ENCODE measurements at regions of chr1 and their contacts with region 1.

Region 1: DNA sequence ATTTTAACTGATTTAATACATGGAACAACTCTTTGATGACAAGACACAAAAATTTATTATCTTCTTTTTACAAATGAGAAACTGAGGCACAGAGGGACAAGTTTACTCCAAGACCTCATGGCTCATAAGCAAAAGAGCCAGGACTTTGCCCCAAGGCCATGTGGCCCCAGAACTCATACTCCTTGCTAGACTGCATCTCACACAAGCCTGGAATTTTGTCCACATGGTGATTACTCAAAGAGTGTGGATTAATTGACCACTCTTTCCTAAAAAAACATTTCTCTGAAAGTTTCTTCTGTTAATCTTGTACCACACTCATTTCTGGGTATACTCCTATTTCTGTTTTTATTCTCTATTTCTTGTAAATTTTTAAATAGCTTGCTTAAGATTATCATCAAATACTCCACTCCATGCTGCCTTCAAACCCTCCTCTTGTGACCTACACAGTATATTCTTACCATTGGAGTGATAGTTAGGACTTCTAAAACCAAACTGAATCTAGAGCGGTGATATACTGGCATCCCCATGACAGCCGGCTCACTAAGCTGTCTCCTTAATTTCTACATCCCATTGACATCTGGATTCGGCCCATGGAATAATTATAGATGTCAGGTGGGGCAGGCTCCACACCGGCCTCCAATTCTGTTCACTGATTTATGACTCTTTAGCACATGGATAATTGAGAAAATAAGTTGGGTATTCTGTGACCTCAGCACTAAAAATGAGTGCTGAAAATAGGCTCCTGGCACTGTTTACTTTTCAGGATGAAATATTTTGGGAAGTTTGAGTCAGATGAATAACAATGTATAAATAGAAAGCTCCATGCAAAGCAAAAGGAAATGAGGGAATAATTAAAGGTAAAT is 16.1 kb downstream of the RGS4 start:
- DNase-seq: no peak
- ATAC-seq: peak; percentile 72
- H3K4me3 ChIP-seq: no peak overlapping the region
- H3K27ac ChIP-seq: peak overlapping the region; percentile 93 to 95
- H3K4me1 ChIP-seq: peaks cover 9 to 14% of the 10 kb centered on the region in 2 donors
- H3K27me3 ChIP-seq: no peaks in the 10 kb centered on the region

Region 2: DNA sequence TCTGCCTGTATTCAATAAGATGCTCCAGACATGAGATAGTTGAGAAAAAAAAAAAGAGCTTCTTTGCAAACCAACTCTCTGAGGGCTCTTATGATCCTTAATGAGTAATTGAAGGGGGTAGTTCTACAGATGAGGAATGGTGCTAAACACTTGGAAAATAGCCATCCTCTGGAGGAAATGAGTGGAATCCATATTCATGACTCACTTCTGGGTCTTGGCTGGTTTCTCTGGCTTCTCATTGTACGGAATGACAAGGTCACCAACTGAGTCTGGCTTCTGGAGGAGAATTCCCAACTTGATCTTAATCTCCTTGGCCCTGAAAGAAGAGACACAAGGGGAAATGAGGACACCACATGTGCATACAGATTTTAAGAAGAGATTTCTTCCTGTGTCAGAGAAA is 82.8 kb after region 1 on chr1:
- intact Hi-C with region 1: loop called in 1 of 2 experiments (anchors 5 kb)
- DNase-seq: no peak
- ATAC-seq: peak; percentile 55
- H3K4me3 ChIP-seq: no peak overlapping the region
- H3K27ac ChIP-seq: no peak overlapping the region
- H3K4me1 ChIP-seq: peaks cover 10 to 19% of the 10 kb centered on the region in 2 donors
- H3K27me3 ChIP-seq: no peaks in the 10 kb centered on the region